Endothelial cell of umbilical vein (primary cell): ENCODE measurements at regions of chr2 and their contacts with region 1.

Region 1: DNA sequence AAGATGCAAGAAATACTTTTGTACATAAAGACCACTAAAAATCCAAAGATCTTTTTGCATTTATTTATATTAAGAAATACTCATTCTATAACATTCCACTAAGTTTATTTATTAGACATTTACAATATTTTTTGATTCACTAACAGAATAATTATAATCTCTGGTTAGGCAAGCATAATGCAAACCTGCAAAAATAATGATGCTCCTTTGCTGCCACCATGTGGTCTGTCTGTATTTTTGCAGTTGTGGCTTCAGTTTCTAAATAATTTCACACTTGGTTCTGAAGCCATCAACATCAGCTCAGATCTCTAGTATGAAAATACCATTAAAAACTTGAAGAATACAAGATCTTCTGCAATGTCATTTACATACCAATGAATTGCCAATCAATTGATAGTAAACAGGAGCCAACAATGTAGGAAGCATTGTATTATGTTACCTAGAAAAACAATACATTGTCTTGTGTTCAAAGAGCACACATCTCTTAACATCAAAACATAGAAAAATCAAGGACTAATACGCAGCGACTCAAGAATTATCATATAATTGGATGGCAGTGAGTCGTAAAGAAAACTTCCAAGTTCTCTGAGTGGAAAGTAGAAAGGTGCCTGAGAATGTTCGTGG is 28.8 kb upstream of the WDR75 start:
- DNase-seq: peak; percentile 72
- H3K4me3 ChIP-seq: no peak overlapping the region
- H3K27ac ChIP-seq: no peak overlapping the region
- H3K4me1 ChIP-seq: peaks cover 28% of the 10 kb centered on the region
- H3K27me3 ChIP-seq: no peaks in the 10 kb centered on the region
- CTCF ChIP-seq: peak; percentile 23 to 37
- POLR2A ChIP-seq: no peak

Region 2: GRCh38 chr2:187581125-187581896 is 1831.1 kb before region 1 on chr2:
- CTCF ChIA-PET with region 1: interaction called, 4 read pairs
- POLR2A ChIA-PET with region 1: no interaction called
- dilution Hi-C with region 1: no loop called
- intact Hi-C with region 1: loop called (anchors 5 kb)
- DNase-seq: peak; percentile 67
- H3K4me3 ChIP-seq: peak overlapping the region in 1 of 3 experiments; percentile 34
- H3K27ac ChIP-seq: peak overlapping the region; percentile 78
- H3K4me1 ChIP-seq: peaks cover 23% of the 10 kb centered on the region
- H3K27me3 ChIP-seq: no peaks in the 10 kb centered on the region
- CTCF ChIP-seq: peak; percentile 45 to 46
- POLR2A ChIP-seq: no peak

Region 3: DNA sequence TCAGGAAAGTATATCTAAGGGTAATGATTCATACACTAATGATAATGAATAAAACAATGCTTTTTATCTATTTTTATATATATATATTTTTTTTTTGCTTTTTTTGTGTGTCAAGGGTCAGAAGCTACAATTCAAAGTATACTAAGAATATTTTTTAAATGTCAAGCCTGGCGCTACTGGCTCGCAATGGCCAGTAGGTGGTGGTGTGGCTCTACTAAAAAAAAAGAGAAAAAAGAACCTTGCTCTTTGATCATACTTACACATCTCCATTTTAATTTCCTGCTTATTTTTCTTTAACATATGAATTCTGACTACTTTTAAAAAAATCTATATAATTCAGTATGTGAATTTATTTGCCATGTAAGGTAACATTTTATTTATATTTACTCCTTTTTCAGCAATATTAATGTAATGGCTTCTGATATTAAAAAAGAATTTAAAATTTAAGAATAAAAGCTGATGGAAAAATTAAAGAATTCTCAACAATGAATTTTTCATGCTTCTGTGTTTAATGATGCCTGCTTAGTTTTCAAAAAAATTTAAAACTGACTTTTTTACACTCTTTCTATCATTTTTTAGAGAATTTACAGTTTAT is 887.8 kb before region 1 on chr2:
- CTCF ChIA-PET with region 1: interaction called, 80 read pairs
- POLR2A ChIA-PET with region 1: no interaction called
- dilution Hi-C with region 1: no loop called
- intact Hi-C with region 1: loop called (anchors 1 kb)
- DNase-seq: peak; percentile 65
- H3K4me3 ChIP-seq: no peak overlapping the region
- H3K27ac ChIP-seq: no peak overlapping the region
- H3K4me1 ChIP-seq: peaks cover 22% of the 10 kb centered on the region
- H3K27me3 ChIP-seq: no peaks in the 10 kb centered on the region
- CTCF ChIP-seq: peak; percentile 49 to 59
- POLR2A ChIP-seq: no peak

Region 4: GRCh38 chr2:188983427-188984064 is 428.9 kb before region 1 on chr2:
- CTCF ChIA-PET with region 1: interaction called, 19 read pairs
- POLR2A ChIA-PET with region 1: no interaction called
- dilution Hi-C with region 1: no loop called
- intact Hi-C with region 1: loop called (anchors 2 kb)
- DNase-seq: peak; percentile 37
- H3K4me3 ChIP-seq: no peak overlapping the region
- H3K27ac ChIP-seq: no peak overlapping the region
- H3K4me1 ChIP-seq: peaks cover 12% of the 10 kb centered on the region
- H3K27me3 ChIP-seq: no peaks in the 10 kb centered on the region
- CTCF ChIP-seq: peak; percentile 35
- POLR2A ChIP-seq: no peak

Region 5: DNA sequence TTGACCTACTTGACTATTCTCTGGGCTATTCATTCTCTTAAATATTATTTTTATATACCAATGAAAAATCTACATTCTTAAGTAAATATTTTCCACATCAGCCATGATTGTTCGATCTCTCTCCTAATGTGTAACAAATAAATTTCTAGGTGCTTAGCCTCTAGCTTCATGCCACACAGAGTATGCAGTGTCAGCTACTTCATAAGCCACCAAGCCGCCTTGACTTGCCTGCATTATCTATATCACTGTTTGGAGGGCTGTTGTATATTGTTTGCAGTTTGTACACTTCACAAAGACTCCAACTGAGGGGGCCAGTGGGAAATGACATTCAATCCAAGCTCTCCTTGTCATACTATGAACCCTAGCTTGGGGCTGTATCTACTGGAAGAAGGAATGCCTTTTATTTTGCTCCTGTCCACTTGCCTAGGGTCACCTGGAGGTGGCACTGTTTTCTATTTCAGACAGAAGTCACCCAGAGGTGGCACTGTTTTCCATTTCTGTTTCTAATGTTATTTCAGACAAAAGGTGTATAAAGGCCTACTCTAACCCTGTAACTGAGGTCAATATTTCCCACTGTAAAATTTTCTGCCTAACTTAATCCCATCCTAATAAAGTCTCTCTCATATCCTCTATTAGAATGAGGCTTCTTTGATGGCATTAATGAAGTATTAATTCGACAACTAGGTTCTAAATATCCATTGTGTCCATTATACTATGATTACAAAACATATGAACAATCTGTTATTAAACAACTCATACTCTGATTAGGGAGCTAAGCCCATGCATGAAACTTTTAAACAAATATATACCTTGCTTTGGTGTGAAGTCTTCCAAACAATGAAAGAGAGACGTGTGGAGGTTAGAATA is 269.3 kb before region 1 on chr2:
- CTCF ChIA-PET with region 1: interaction called, 5 read pairs
- POLR2A ChIA-PET with region 1: no interaction called
- dilution Hi-C with region 1: no loop called
- intact Hi-C with region 1: loop called (anchors 1 kb)
- DNase-seq: peak; percentile 49
- H3K4me3 ChIP-seq: no peak overlapping the region
- H3K27ac ChIP-seq: no peak overlapping the region
- H3K4me1 ChIP-seq: no peaks in the 10 kb centered on the region
- H3K27me3 ChIP-seq: no peaks in the 10 kb centered on the region
- CTCF ChIP-seq: peak; percentile 69 to 88
- POLR2A ChIP-seq: no peak

Region 6: DNA sequence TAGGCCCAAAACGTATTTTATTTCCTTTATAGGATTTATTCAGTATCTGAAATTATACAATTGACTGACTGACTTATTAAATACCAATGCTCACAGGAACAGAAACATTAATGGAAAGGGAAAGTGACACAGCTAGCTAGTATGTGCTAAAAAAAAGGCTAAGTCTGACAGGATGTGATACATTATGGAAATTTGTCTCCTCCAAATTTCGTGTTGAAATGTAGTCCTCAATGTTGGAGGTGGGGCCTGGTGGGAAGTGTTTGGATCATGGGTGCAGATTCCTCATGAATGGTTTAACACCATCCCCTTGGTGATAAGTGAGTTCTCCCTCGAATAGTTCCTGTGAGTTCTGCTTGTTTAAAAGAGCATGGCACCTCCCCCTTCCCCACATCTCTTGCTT is 41.7 kb before region 1 on chr2:
- CTCF ChIA-PET with region 1: interaction called, 5 read pairs
- POLR2A ChIA-PET with region 1: no interaction called
- dilution Hi-C with region 1: no loop called
- intact Hi-C with region 1: loop called (anchors 1 kb)
- DNase-seq: peak; percentile 79
- H3K4me3 ChIP-seq: peak overlapping the region in 1 of 3 experiments; percentile 35
- H3K27ac ChIP-seq: peak overlapping the region; percentile 88
- H3K4me1 ChIP-seq: peaks cover 40% of the 10 kb centered on the region
- H3K27me3 ChIP-seq: no peaks in the 10 kb centered on the region
- CTCF ChIP-seq: no peak
- POLR2A ChIP-seq: no peak